KBM-7 (cell line): ENCODE measurements at regions of chr1 and their contacts with region 1.

Region 1: GRCh38 chr1:157163273-157164127 is 25.3 kb upstream of the ETV3 start:
- DNase-seq: peak; percentile 70

Region 2: GRCh38 chr1:156816561-156817328 is 346.8 kb before region 1 on chr1 and contains the start of gene SH2D2A:
- in situ Hi-C with region 1: no loop called
- DNase-seq: peak; percentile 87

Region 3: GRCh38 chr1:157090196-157090647 is 73.3 kb before region 1 on chr1:
- in situ Hi-C with region 1: loop called (anchors 10 kb)
- DNase-seq: peak; percentile 66

Region 4: DNA sequence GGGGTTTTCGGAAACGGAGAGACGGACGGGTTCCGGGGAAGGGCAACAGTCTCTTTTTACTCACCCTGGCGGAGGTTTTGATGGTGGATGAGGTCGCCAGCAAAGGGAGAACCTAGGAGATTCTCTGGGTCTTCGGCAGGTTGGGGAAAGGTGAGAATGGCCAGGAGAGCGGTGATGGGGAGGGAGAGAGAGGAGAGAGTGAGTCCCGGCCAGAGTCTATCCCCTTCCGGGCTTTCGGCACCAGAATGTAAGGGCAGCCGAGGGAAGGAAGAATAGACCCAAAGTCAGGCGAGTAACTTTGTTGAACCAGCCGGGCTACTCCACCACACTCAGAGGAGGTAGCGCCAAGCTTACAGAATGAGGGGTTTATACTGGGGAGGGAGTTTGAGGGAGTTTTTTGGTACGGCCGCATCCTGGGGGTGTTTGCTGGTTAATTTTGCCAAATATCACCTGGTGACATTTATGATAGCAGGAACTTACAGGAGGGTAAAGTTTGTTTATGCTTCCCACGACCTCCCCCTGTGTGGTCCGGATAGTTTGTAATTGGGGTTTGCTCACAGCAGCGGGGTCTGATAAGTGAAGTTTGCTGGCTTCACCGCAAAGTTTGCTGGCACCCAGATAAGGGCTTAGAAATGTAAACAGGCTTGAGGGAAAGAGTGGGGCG is 115.8 kb after region 1 on chr1:
- in situ Hi-C with region 1: no loop called
- DNase-seq: no peak